ENCODE measurements at regions of chr12 and their contacts with region 1.

Region 1: GRCh38 chr12:92928962-92929915 is at the start of gene EEA1:
- DNase-seq: peak; percentile 79
- H3K4me3 ChIP-seq: peak within 1 kb of the TSS; percentile 74
- CTCF ChIP-seq: no peak

Region 2: GRCh38 chr12:92378682-92379479 is 550.4 kb before region 1 on chr12:
- in situ Hi-C with region 1: no loop called
- DNase-seq: no peak
- H3K4me3 ChIP-seq: no peak overlapping the region
- CTCF ChIP-seq: no peak

Region 3: GRCh38 chr12:92859650-92860386 is 69.4 kb before region 1 on chr12:
- in situ Hi-C with region 1: no loop called
- DNase-seq: no peak
- H3K4me3 ChIP-seq: no peak overlapping the region
- CTCF ChIP-seq: no peak

Region 4: DNA sequence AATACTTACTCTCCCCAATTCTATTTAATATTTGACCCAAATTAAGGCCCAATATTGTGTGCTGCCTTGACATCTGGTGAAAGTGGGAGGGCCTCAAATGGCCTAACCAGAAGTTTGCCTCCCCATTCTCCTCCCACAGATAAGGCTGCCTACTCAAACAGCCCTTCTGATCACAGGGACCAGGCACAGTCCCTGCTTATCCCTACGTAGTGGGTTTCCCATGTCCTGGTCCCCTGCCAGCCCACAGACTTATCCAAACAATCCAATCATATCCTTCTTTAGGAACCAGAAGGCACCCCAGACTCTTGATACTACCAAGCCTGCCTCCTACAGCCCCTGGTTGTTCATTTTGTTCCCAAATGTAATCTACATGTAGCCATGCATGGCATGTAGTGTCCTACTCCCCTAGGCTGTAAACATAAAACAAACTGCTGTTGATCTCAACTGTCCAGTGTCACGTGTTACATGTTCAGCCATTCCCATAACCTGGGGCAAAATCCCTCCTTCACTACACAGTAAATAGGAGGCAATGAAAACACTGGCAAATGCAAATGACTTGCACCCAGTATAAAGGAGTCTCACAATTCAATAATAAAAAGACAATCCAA is 49.4 kb before region 1 on chr12:
- in situ Hi-C with region 1: loop called (anchors 5 kb)
- DNase-seq: no peak
- H3K4me3 ChIP-seq: no peak overlapping the region
- CTCF ChIP-seq: no peak